CD4-positive, alpha-beta T cell (primary cell): ENCODE measurements at regions of chr2 and their contacts with region 1.

Region 1: DNA sequence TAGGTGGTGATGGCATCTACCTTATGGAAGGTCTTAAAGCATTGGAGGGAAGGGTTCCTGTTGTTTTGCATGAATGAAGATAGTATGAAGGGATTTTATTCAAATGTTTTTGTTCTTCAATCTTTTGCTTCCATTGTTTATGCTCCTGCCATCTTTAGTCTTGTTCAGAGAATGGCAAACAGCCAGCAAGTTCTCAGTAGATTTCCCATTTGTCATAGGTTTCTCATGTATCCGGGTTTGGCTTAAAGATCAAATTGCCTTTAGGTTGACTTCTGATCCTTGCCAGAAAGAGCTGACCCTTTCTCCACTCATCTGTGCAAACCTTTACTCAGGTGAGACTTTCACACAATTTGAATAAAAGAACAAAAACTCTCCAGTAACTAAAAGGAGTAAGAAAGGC is 44.2 kb upstream of the STAT4 start:
- DNase-seq: no peak
- ATAC-seq: no peak
- H3K4me3 ChIP-seq: no peak overlapping the region
- H3K4me3 Mint-ChIP-seq: no peak overlapping the region
- H3K27ac ChIP-seq: peak overlapping the region; percentile 29 to 37
- H3K27ac Mint-ChIP-seq: peak overlapping the region; percentile 81
- H3K4me1 ChIP-seq: peaks cover 24% of the 10 kb centered on the region
- H3K4me1 Mint-ChIP-seq: peaks cover 59% of the 10 kb centered on the region
- H3K27me3 ChIP-seq: no peaks in the 10 kb centered on the region
- H3K27me3 Mint-ChIP-seq: no peaks in the 10 kb centered on the region
- CTCF ChIP-seq: no peak

Region 2: GRCh38 chr2:191206613-191207481 is 11.8 kb after region 1 on chr2:
- CTCF ChIA-PET with region 1: no interaction called
- POLR2A ChIA-PET with region 1: interaction called, 10 read pairs
- intact Hi-C with region 1: no loop called
- DNase-seq: peak in 9 of 14 experiments; percentile 13 to 82 (median 37)
- ATAC-seq: peak; percentile 66
- H3K4me3 ChIP-seq: peak overlapping the region; percentile 47
- H3K4me3 Mint-ChIP-seq: peak overlapping the region; percentile 21
- H3K27ac ChIP-seq: peak overlapping the region in 1 of 2 donors; percentile 69
- H3K27ac Mint-ChIP-seq: peak overlapping the region; percentile 21
- H3K4me1 ChIP-seq: peaks cover 35% of the 10 kb centered on the region
- H3K4me1 Mint-ChIP-seq: peaks cover 42% of the 10 kb centered on the region
- H3K27me3 ChIP-seq: no peaks in the 10 kb centered on the region
- H3K27me3 Mint-ChIP-seq: no peaks in the 10 kb centered on the region
- CTCF ChIP-seq: no peak